Activated naive CD8-positive, alpha-beta T cell treated with anti-CD3 and anti-CD28 coated beads, Interleukin-2, amount 10 ng/mL, durations not matched to agents 7 days and 5 days (primary cell): ENCODE measurements at regions of chr12 and their contacts with region 1.

Region 1: GRCh38 chr12:57476162-57476992 is 3.3 kb downstream of the ARHGAP9 start:
- DNase-seq: peak; percentile 85
- ATAC-seq: peak; percentile 39
- H3K4me3 Mint-ChIP-seq: peak overlapping the region; percentile 96
- H3K27ac Mint-ChIP-seq: peak overlapping the region; percentile 99
- H3K4me1 Mint-ChIP-seq: peaks cover 54% of the 10 kb centered on the region
- H3K27me3 Mint-ChIP-seq: no peaks in the 10 kb centered on the region

Region 2: DNA sequence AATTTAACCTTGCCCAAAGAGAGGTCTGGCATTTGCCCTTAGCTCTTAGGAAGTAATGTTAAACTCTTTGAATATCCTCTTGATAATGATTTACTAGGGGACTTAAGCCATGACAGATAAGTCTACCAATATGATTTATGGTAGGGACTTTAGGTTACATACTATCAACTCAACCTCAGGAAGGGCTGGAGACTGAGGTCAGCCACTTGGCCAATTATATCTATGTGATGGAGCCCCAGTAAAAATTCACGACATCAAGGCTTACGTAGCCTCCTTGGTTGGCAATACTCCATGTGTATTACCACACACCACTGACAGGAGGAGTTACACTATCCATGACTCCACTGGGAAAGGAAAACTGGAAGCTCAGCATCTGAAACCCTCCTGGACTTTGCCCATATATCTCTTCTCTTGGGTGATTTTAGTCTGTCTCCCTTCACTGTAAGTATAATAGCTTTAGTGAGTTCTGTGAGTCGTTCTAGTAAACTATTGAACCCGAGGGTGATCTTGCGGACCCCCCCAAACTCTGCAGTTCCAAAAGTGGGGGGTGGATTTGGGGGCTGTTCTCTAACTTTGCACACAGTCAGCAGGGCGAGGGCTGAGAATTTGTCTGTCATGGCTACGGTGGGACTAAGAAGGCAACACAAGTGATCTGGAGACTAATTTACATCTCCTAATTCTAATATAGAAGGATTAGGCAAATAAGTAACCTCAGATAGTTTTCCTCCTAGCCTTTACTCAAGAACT is 107.9 kb before region 1 on chr12:
- POLR2A ChIA-PET with region 1: no interaction called
- DNase-seq: no peak
- ATAC-seq: no peak
- H3K4me3 Mint-ChIP-seq: no peak overlapping the region
- H3K27ac Mint-ChIP-seq: no peak overlapping the region
- H3K4me1 Mint-ChIP-seq: peaks cover 2% of the 10 kb centered on the region
- H3K27me3 Mint-ChIP-seq: no peaks in the 10 kb centered on the region

Region 3: DNA sequence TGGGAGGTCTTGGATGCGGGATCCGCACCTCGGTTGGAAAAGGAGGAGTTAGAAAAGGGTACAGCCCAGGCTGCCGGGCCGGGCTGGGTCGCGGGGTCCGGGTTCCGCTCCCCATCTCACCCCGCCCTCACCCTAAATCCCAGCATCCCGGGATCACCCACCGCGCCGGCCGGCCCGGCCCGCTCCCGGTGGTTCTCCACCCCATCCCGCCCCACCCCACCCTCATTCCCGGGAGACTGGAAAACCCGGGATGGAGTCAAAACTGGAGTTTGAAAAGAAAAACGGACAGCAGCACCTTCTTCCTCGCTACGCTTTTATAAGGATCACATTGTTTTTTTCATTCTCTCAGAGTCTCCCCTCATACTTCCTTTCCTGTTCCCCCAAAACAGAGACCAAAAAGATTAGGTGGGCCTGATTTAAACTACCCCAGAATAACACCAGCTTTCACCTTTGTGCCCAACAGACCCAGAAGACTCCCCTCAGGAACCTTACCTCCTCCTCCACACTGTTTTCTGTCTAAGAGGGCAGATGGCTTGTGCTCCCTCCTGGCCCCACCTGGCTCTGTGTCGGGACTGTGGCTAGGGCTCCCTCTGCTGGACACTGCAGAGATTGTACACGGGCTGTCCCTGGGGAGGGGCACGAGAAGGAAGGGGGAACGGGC is 14.0 kb before region 1 on chr12:
- POLR2A ChIA-PET with region 1: interaction called, 119 read pairs
- DNase-seq: peak; percentile 87
- ATAC-seq: peak; percentile 74
- H3K4me3 Mint-ChIP-seq: peak overlapping the region; percentile 92
- H3K27ac Mint-ChIP-seq: peak overlapping the region; percentile 27
- H3K4me1 Mint-ChIP-seq: peaks cover 35% of the 10 kb centered on the region
- H3K27me3 Mint-ChIP-seq: peaks cover 11% of the 10 kb centered on the region

Region 4: DNA sequence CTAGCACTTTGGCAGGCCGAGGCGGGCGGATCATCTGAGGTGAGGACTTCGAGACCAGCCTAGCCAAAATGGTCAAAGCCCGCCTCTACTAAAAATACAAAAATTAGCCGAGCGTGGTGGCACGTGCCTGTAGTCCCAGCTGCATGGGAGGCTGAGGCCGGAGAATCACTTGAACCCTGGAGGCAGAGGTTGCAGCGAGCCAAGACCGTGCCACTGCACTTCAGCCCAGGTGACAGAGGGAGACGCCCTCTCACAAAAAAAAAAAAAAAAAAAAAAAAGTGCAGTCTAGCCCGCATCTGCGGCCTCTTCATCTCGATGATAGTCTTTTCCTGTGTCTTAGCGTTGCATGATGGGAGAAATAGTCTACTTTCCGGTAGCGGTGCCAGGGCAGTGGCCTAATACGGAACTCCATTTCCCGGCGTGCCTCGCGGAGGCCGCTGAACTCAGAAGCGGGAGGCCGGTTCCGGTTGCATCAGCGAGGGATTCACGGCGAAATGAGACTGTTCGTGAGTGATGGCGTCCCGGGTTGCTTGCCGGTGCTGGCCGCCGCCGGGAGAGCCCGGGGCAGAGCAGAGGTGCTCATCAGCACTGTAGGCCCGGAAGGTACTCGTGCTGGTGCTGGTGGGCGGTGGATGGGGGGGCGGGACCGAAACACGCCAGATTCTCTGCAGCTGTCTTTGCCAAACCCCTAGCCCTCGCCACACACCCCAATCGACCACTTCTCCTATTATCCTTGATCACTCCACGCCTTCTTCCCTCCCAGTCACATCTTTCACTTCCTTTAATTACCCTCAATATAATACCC is 11.4 kb after region 1 on chr12 and contains the start of gene MARS1:
- POLR2A ChIA-PET with region 1: interaction called, 16 read pairs
- DNase-seq: peak; percentile 87
- ATAC-seq: peak; percentile 96
- H3K4me3 Mint-ChIP-seq: peak within 1 kb of the TSS; percentile 94
- H3K27ac Mint-ChIP-seq: peak within 1 kb of the TSS; percentile 95
- H3K4me1 Mint-ChIP-seq: peaks cover 31% of the 10 kb centered on the region
- H3K27me3 Mint-ChIP-seq: no peaks in the 10 kb centered on the region
- total RNA-seq, gene MARS1: 293 to 306 TPM